Activated B cell treated with CpG ODN at 0.5 μM for 24 hours (primary cell): ENCODE measurements at regions of chr9 and their contacts with region 1.

Region 1: GRCh38 chr9:21395778-21396717 is 10.8 kb upstream of the IFNA2 start:
- DNase-seq: peak; percentile 47
- ATAC-seq: peak; percentile 65
- H3K4me3 Mint-ChIP-seq: peak overlapping the region; percentile 66
- H3K27ac Mint-ChIP-seq: no peak overlapping the region
- H3K4me1 Mint-ChIP-seq: peaks cover 12% of the 10 kb centered on the region
- H3K27me3 Mint-ChIP-seq: peaks cover 57% of the 10 kb centered on the region
- CTCF ChIP-seq: no peak

Region 2: DNA sequence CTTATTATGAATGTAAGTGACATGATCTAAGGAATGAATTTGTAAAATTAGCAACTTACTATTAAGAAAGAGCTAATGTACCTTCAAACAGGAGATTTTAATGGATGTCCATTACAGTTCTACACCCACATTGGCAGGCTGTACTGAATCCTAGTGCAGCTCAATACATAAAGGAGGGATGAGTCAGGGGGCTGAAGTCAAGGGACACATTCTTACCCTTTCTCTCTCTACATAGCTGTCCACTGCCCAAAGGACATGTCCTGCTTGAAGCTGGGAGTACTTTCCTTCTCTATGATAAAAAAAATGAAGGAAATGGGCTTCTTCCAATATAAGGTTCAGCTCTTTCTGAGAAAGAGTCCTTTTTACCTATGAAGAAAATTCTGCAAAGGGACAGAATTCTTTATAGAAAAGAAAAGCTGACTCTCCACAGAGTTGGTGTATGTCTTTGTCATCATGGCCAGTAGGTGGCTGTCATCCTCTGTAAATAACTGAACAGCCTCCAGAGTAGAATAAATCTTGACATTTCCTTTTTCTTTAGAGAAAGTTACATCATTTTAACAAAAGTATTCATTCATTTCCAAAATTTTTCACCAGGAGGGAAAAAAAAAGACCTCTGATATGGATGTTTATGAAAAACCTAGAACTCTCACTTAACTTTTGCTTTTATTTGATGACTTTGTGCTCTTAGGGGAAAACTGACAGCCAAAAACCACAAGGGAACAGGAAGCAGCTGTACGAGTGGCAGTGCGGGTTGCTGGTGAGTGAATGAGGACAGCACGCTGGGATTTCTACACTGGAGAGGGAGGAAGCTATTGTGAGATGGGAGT is 143.1 kb before region 1 on chr9:
- CTCF ChIA-PET with region 1: interaction called, 13 read pairs
- POLR2A ChIA-PET with region 1: no interaction called
- intact Hi-C with region 1: loop called (anchors 5 kb)
- DNase-seq: no peak
- ATAC-seq: peak; percentile 61
- H3K4me3 Mint-ChIP-seq: no peak overlapping the region
- H3K27ac Mint-ChIP-seq: no peak overlapping the region
- H3K4me1 Mint-ChIP-seq: peaks cover 4% of the 10 kb centered on the region
- H3K27me3 Mint-ChIP-seq: peaks cover 25% of the 10 kb centered on the region
- CTCF ChIP-seq: no peak

Region 3: GRCh38 chr9:21334701-21335632 is 61.1 kb before region 1 on chr9 and contains the start of gene KLHL9:
- CTCF ChIA-PET with region 1: interaction called, 50 read pairs
- POLR2A ChIA-PET with region 1: no interaction called
- intact Hi-C with region 1: loop called (anchors 2 kb)
- DNase-seq: peak; percentile 76
- ATAC-seq: peak; percentile 88
- H3K4me3 Mint-ChIP-seq: peak within 1 kb of the TSS; percentile 91
- H3K27ac Mint-ChIP-seq: peak within 1 kb of the TSS; percentile 87
- H3K4me1 Mint-ChIP-seq: peaks cover 50% of the 10 kb centered on the region
- H3K27me3 Mint-ChIP-seq: peaks cover 7% of the 10 kb centered on the region
- CTCF ChIP-seq: no peak
- total RNA-seq, gene KLHL9: 13.1 and 13.8 TPM in 2 replicates

Region 4: DNA sequence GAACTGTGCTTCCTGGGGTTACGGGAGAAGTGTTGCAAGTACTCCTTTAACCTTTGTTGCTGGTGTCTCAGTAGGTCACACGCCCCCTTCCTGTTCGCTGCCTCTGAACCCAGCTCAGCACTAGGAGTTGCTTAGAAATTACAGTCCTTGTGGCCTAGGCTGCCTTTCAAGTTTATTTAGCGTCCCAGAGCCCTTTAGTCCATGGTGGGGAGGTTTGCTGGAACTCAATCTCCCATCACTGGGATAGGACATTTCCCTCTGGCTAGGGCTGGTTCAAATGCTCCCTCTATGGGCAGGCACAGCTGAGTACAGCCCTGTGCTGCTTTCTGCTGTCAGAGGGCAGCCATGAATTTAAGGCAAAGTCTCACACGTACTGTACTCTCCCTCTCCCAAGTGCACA is 17.6 kb after region 1 on chr9:
- CTCF ChIA-PET with region 1: interaction called, 8 read pairs
- POLR2A ChIA-PET with region 1: no interaction called
- intact Hi-C with region 1: loop called (anchors 2 kb)
- DNase-seq: no peak
- ATAC-seq: no peak
- H3K4me3 Mint-ChIP-seq: no peak overlapping the region
- H3K27ac Mint-ChIP-seq: no peak overlapping the region
- H3K4me1 Mint-ChIP-seq: peaks cover 31% of the 10 kb centered on the region
- H3K27me3 Mint-ChIP-seq: peaks cover 44% of the 10 kb centered on the region
- CTCF ChIP-seq: no peak

Region 5: GRCh38 chr9:21434202-21435014 is 38.4 kb after region 1 on chr9:
- CTCF ChIA-PET with region 1: interaction called, 11 read pairs
- POLR2A ChIA-PET with region 1: no interaction called
- intact Hi-C with region 1: no loop called
- DNase-seq: no peak
- ATAC-seq: no peak
- H3K4me3 Mint-ChIP-seq: no peak overlapping the region
- H3K27ac Mint-ChIP-seq: no peak overlapping the region
- H3K4me1 Mint-ChIP-seq: peaks cover 10% of the 10 kb centered on the region
- H3K27me3 Mint-ChIP-seq: peaks cover 44% of the 10 kb centered on the region
- CTCF ChIP-seq: peak; percentile 29

Region 6: GRCh38 chr9:21461377-21461776 is 65.3 kb after region 1 on chr9:
- CTCF ChIA-PET with region 1: no interaction called
- POLR2A ChIA-PET with region 1: no interaction called
- intact Hi-C with region 1: no loop called
- DNase-seq: no peak
- ATAC-seq: no peak
- H3K4me3 Mint-ChIP-seq: no peak overlapping the region
- H3K27ac Mint-ChIP-seq: no peak overlapping the region
- H3K4me1 Mint-ChIP-seq: no peaks in the 10 kb centered on the region
- H3K27me3 Mint-ChIP-seq: peaks cover 22% of the 10 kb centered on the region
- CTCF ChIP-seq: no peak